ENCODE measurements at regions of chr1 and their contacts with region 1.

Region 1: DNA sequence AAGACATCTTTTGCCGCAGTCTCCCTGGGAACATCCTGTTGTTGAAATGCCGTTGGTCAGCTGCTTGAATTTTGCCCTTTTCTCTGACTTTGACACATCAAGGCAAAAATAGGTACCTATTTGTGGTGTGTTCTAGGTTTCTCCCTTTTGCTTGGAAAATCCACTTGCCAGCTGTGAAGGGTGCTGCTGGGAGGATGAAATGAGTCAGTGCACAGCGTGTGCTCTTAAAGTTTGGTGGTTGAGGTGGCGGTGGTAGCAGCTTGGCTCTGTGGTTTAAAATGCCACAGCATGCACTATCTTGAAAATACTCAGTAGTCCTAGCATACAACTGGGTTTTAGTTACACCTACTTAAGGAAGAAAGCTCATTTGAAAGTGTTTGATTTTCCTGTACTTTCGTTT is 183.8 kb downstream of the DHRS3 start:
- DNase-seq: peak; percentile 70
- H3K4me3 Mint-ChIP-seq: peak overlapping the region; percentile 32
- H3K27ac Mint-ChIP-seq: peak overlapping the region; percentile 92
- H3K4me1 Mint-ChIP-seq: peaks cover 67% of the 10 kb centered on the region
- H3K27me3 Mint-ChIP-seq: peaks cover 3% of the 10 kb centered on the region

Region 2: DNA sequence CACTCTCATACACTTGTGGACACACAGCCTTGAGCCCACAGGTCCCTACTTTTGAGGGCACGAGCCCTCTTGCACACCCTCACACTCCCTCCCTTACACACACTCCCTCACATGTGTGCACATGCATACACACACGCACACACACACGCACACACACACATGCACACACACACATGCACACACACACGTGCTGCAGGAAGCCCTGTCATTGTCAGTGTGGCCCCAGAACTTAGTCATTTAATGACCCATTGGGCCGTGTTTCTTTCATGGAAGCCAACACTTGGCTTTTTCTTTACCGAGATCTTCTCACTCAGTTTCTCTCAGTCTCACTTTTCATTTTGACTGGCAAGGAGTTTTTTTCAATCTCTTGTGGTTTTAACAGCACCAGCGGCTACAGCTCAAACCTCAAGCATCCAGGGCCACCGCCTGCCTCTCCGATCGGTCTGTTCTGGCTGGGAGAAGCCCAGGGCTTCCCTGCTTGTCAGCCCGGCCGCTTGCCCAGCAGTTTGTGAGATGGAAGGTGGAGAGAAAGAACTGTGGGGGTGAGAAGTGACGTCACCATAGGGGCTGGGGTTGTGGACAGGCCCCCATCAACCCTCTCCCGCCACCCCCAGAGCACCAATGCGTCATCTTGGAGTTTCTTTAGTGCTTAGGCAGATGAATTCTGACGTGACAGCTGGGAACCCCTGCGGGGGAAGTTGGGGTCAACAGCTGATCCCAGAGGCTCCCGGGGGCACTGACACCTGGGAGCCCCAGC is 386.9 kb before region 1 on chr1:
- intact Hi-C with region 1: loop called (anchors 2 kb)
- DNase-seq: peak; percentile 71
- H3K4me3 Mint-ChIP-seq: no peak overlapping the region
- H3K27ac Mint-ChIP-seq: no peak overlapping the region
- H3K4me1 Mint-ChIP-seq: peaks cover 18% of the 10 kb centered on the region
- H3K27me3 Mint-ChIP-seq: no peaks in the 10 kb centered on the region

Region 3: DNA sequence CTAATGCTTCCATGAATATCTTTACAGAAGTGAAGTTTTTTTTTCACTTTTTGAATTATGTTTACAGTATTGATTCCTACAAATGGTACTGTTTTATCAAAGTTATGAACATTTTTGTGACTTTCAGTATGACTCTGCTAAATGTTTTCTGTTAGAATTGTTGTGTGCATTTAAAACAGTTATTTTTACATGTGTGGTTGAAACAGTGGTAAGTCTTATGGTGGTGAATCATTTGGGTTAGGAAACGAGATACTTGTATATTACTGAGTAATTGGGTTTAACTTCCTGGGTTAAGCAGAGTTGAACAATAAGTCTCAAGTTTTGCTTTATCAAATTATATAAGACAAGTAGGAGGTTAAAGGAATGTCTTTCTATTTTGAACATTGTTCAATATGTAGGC is 137.6 kb before region 1 on chr1:
- intact Hi-C with region 1: loop called (anchors 1 kb)
- DNase-seq: no peak
- H3K4me3 Mint-ChIP-seq: peak overlapping the region; percentile 50
- H3K27ac Mint-ChIP-seq: peak overlapping the region; percentile 72
- H3K4me1 Mint-ChIP-seq: peaks cover 46% of the 10 kb centered on the region
- H3K27me3 Mint-ChIP-seq: no peaks in the 10 kb centered on the region

Region 4: GRCh38 chr1:12415038-12415466 is 19.1 kb before region 1 on chr1:
- intact Hi-C with region 1: loop called (anchors 1 kb)
- DNase-seq: no peak
- H3K4me3 Mint-ChIP-seq: no peak overlapping the region
- H3K27ac Mint-ChIP-seq: no peak overlapping the region
- H3K4me1 Mint-ChIP-seq: peaks cover 22% of the 10 kb centered on the region
- H3K27me3 Mint-ChIP-seq: no peaks in the 10 kb centered on the region

Region 5: DNA sequence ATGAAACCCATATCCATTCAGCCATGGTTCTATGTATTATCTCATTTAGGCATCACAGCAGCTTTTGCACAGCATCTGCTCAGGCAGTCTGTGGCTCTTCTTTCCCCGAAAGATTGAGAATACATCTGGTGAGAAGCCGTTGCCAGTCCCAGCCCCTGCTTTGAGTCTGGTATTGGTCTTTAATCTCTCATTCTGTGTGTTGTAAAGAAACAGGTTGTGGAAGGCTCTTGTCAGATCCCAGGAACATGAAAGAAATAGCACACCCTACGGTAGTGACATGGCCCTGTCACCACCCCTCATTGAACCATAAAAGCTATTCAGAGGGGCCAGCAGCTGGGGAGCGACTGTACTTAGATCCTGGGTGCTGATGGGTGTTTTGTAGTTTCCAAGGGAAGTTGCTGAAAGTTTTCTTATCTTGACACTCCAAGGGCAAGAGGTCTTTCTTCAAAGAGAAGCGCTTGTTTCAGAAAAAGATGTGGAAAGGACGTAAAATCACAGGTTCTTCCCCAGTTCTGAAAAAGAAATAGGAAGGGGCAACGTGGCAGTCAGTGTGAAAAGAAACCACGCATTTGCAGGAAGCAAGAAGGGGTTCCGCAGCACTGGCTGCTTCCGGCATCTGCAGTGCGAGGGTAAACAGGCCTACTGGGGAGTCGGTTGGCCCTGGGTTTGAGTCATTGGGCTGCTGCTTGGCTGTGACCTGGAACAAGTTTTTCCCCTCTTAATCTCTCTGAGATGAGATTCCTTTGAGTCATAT is 38.8 kb after region 1 on chr1:
- intact Hi-C with region 1: loop called (anchors 1 kb)
- DNase-seq: peak; percentile 64
- H3K4me3 Mint-ChIP-seq: peak overlapping the region; percentile 69
- H3K27ac Mint-ChIP-seq: peak overlapping the region; percentile 93
- H3K4me1 Mint-ChIP-seq: peaks cover 82% of the 10 kb centered on the region
- H3K27me3 Mint-ChIP-seq: no peaks in the 10 kb centered on the region

Region 6: GRCh38 chr1:12604114-12604874 is 170.1 kb after region 1 on chr1:
- intact Hi-C with region 1: loop called (anchors 1 kb)
- DNase-seq: peak; percentile 49
- H3K4me3 Mint-ChIP-seq: peak overlapping the region; percentile 47
- H3K27ac Mint-ChIP-seq: peak overlapping the region; percentile 64
- H3K4me1 Mint-ChIP-seq: peaks cover 41% of the 10 kb centered on the region
- H3K27me3 Mint-ChIP-seq: peaks cover 4% of the 10 kb centered on the region